ENCODE measurements at regions of chr2 and their contacts with region 1.

Region 1: GRCh38 chr2:9843229-9844035 is at the start of gene TAF1B:
- DNase-seq: peak; percentile 81 to 97
- H3K4me3 ChIP-seq: peak within 1 kb of the TSS; percentile 71 to 77 (median 76)
- H3K27ac ChIP-seq: peak within 1 kb of the TSS; percentile 86 to 95 (median 88)
- H3K4me1 ChIP-seq: peaks cover 16 to 41% (median 29%) of the 10 kb centered on the region in 4 donors
- H3K27me3 ChIP-seq: no peaks in the 10 kb centered on the region
- CTCF ChIP-seq: peak in 1 of 7 experiments; percentile 11
- EP300 ChIP-seq: no peak
- POLR2A ChIP-seq: peak in 1 of 4 donors; percentile 18
- total RNA-seq, gene TAF1B: 5.8 to 34.6 (median 20.7) TPM

Region 2: DNA sequence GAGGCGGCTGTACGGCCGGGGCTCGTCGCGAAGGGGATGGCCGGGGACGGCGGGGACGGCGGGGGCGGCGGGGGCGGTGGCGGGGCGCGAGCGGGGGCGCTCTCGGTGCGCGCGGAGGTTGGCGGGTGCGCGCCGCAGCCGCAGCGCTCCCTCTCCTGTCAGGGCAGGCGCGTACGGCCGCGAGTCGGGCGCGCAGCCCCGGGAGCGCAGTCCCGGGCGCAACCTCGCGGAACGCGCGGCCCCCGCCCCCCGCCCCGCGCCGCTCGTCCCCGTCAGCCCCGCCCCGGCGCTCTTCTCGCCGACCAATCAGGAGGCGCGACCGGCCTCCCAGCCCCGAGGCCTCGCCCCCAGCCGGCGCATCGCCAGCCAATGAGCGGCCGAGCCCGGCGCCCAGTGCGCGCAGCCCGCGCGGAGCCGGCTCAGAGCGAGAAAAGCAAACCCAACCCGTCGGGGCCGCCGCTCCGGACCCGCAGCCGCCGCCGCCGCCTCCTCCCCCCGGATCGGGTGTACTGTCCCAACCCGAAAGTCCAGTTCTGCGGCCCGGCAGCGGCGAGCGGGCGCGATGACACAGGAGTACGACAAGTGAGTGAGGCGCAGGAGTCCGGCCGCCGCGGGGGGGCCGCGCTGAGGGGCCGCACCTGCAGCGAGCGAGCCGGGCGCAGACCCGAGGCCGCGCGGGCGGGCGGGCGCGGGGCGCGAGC is 108.0 kb after region 1 on chr2 and contains the start of gene GRHL1:
- intact Hi-C with region 1: loop called (anchors 10 kb)
- DNase-seq: peak; percentile 95 to 98
- H3K4me3 ChIP-seq: peak within 1 kb of the TSS; percentile 65 to 87 (median 78)
- H3K27ac ChIP-seq: peak within 1 kb of the TSS; percentile 63 to 89 (median 85)
- H3K4me1 ChIP-seq: peaks cover 0 to 34% (median 13%) of the 10 kb centered on the region in 4 donors
- H3K27me3 ChIP-seq: peaks cover 0 to 13% (median 2%) of the 10 kb centered on the region in 3 donors
- CTCF ChIP-seq: no peak
- EP300 ChIP-seq: no peak
- POLR2A ChIP-seq: no peak
- total RNA-seq, gene GRHL1: 0.89 to 5.8 (median 4.5) TPM

Region 3: GRCh38 chr2:10135296-10136089 is 292.1 kb after region 1 on chr2:
- intact Hi-C with region 1: no loop called
- DNase-seq: no peak
- H3K4me3 ChIP-seq: no peak overlapping the region
- H3K27ac ChIP-seq: no peak overlapping the region
- H3K4me1 ChIP-seq: no peaks in the 10 kb centered on the region
- H3K27me3 ChIP-seq: no peaks in the 10 kb centered on the region
- CTCF ChIP-seq: no peak
- EP300 ChIP-seq: no peak
- POLR2A ChIP-seq: no peak

Measured in stomach (tissue), 19 donors.